ENCODE measurements at regions of chr1 and their contacts with region 1.

Region 1: DNA sequence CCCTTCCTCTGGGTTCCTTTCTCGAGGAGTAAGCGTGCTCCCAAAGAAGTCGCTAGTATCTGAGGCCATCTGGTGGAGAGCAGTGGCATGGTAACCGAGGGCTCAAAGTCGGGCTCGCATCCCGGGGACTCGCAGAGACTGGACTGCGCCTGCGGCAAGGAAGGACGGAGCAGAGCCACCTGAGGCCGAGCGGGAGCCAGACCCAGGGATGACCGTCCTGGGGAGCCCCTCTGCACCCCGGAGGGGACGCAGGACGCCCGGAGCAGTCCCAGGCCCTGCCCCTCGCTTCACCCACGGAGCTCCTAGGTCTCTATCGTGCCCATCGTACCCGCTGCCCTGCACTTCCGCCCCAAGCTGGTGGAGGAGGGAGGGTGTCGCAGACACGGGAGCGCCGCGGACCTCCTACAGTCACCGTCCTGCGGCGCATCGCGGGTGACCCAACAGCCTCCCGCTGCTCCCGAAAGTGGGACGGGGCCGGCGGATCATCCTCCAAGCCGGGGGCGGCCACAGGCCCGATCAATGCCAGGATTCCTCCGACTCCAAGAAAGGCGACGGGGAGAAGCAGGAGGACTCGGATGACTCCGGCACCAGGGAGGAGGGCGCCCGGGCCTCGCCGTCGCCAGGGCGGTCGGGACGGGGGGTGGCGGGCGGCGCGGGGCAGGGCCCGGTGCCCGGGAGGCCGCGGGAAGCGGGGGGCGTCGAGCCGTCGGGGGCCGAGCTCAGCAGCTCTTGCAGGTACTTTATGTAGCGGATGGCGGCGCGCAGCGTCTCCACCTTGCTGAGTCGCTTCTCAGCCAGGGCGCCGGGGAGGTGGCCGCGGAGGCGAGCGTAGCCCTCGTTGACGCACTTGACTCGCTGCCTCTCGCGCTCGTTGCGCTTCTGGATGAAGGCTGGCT is 2.3 kb upstream of the CACNA1S start:
- DNase-seq: peak; percentile 93
- H3K4me3 ChIP-seq: peak overlapping the region in 2 of 3 experiments; percentile 9 to 35
- H3K27ac ChIP-seq: no peak overlapping the region
- H3K4me1 ChIP-seq: no peaks in the 10 kb centered on the region
- H3K27me3 ChIP-seq: peaks cover 26 to 45% of the 10 kb centered on the region in 2 experiments
- CTCF ChIP-seq: peak; percentile 73 to 89
- POLR2A ChIP-seq: no peak

Region 2: DNA sequence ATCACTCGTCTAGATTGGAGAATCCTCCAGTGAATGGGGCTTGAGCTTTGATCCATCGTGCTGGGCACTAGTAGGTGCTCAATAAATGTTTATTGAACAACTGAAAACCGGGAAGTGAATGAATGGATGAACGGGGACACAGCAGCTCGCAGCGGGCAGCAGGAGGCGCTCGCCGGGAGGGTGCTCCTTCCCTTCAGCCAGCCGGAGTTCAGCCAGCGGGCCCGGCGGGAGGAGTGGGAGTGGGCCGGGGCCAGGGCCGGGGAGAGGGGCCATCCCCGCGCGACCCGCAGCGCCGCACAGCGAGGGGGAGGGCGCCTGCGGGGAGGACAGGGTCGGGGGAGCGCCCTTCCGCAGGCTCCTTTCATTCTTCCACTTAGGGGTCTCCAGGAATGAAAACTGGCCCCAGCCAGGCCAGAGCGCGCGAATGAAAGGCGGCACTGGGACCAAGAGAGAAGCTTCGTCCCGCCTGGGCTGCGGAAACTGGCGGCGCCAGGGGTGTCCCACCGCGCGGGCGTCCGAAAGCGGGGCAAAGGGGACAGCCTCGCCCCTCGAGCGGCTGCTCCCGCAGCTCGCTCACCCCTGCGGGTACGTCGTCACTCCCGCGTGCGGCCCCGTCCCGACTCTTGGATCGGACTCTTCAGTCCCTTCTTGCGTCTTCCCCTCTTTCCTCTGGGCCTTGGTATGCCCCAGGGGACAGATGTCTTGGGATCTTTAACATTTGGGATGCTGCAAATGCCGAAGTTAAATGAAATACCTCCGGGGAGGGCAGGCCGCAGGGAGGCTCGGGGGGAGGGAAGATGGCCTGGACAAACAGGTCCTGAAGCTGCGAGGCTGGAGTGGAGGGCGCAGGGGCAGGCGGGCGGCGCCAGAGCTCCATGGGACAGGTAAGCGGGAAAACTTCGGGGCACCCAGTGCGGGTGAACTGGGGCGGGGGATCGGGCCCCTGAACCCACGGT is 223.4 kb before region 1 on chr1:
- CTCF ChIA-PET with region 1: no interaction called
- POLR2A ChIA-PET with region 1: no interaction called
- dilution Hi-C with region 1: no loop called
- intact Hi-C with region 1: loop called (anchors 5 kb)
- DNase-seq: peak; percentile 27
- H3K4me3 ChIP-seq: peak overlapping the region in 2 of 3 experiments; percentile 30 to 47
- H3K27ac ChIP-seq: no peak overlapping the region
- H3K4me1 ChIP-seq: no peaks in the 10 kb centered on the region
- H3K27me3 ChIP-seq: peaks cover 39 to 46% of the 10 kb centered on the region in 2 experiments
- CTCF ChIP-seq: peak; percentile 50
- POLR2A ChIP-seq: no peak

Region 3: GRCh38 chr1:201023517-201023902 is 91.0 kb before region 1 on chr1 and contains the start of gene KIF21B:
- CTCF ChIA-PET with region 1: interaction called, 12 read pairs
- POLR2A ChIA-PET with region 1: no interaction called
- dilution Hi-C with region 1: no loop called
- intact Hi-C with region 1: no loop called
- DNase-seq: peak; percentile 75
- H3K4me3 ChIP-seq: peak within 1 kb of the TSS; percentile 11 to 49 (median 13)
- H3K27ac ChIP-seq: no peak within 1 kb of the TSS
- H3K4me1 ChIP-seq: peaks cover 37% of the 10 kb centered on the region
- H3K27me3 ChIP-seq: no peaks in the 10 kb centered on the region
- CTCF ChIP-seq: no peak
- POLR2A ChIP-seq: no peak
- total RNA-seq, gene KIF21B: 4.4 and 4.7 TPM in 2 replicates

Region 4: DNA sequence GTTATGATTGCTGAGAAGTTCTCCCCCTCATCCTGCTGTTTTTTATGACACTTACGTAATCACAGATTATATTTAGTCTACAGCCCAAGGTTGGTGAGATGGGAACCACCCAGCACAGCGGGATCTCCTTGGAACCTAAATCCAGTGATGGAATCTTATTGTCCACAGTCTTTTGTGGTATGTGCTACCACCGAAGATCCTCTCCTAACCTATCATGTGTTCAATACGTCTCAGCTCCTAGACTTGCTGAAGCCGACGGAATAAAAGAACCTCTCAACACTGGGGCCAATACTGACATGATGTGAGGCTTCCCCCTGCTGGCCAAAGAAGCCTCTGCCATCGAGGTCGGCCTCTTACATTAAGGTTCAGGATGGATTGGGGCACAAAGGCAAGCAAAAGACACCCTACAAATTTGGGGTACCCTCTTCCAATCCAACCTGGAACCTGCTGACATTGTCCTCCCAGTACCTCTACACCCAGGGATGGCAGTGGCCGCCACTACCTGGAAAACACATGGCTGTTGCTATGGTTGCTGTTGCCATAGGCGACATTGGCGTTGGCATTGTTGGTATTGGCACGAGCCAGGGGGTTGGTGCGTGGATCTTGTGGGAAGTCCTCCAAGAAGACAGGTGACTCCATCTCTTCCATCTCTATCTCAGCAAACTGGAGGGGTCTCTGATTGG is 71.6 kb before region 1 on chr1:
- CTCF ChIA-PET with region 1: interaction called, 7 read pairs
- POLR2A ChIA-PET with region 1: no interaction called
- dilution Hi-C with region 1: no loop called
- intact Hi-C with region 1: loop called (anchors 5 kb)
- DNase-seq: peak; percentile 73
- H3K4me3 ChIP-seq: no peak overlapping the region
- H3K27ac ChIP-seq: no peak overlapping the region
- H3K4me1 ChIP-seq: no peaks in the 10 kb centered on the region
- H3K27me3 ChIP-seq: peaks cover 0 to 2% of the 10 kb centered on the region in 2 experiments
- CTCF ChIP-seq: peak; percentile 86 to 91
- POLR2A ChIP-seq: no peak

Region 5: DNA sequence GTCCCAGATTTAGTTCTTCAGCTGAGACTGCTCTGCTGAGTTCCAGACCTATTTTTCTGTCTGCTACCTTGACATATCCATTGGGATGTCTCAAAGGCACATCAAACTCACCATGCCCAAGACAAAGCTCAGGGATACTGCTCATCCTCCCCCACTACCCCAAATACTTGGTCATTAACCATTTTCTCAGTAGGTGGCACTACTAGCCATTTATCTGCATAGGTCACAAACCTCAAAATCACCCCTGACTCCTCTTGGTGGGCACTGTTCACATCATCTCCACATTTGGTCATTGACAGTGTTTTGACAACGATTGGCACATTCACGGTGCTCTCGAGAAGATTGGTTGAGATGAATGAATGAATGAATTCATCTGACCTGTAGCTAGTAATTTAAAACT is 34.3 kb before region 1 on chr1:
- CTCF ChIA-PET with region 1: interaction called, 54 read pairs
- POLR2A ChIA-PET with region 1: no interaction called
- dilution Hi-C with region 1: no loop called
- intact Hi-C with region 1: no loop called
- DNase-seq: no peak
- H3K4me3 ChIP-seq: no peak overlapping the region
- H3K27ac ChIP-seq: no peak overlapping the region
- H3K4me1 ChIP-seq: no peaks in the 10 kb centered on the region
- H3K27me3 ChIP-seq: peaks cover 7% of the 10 kb centered on the region in 2 experiments
- CTCF ChIP-seq: no peak
- POLR2A ChIP-seq: no peak

Region 6: DNA sequence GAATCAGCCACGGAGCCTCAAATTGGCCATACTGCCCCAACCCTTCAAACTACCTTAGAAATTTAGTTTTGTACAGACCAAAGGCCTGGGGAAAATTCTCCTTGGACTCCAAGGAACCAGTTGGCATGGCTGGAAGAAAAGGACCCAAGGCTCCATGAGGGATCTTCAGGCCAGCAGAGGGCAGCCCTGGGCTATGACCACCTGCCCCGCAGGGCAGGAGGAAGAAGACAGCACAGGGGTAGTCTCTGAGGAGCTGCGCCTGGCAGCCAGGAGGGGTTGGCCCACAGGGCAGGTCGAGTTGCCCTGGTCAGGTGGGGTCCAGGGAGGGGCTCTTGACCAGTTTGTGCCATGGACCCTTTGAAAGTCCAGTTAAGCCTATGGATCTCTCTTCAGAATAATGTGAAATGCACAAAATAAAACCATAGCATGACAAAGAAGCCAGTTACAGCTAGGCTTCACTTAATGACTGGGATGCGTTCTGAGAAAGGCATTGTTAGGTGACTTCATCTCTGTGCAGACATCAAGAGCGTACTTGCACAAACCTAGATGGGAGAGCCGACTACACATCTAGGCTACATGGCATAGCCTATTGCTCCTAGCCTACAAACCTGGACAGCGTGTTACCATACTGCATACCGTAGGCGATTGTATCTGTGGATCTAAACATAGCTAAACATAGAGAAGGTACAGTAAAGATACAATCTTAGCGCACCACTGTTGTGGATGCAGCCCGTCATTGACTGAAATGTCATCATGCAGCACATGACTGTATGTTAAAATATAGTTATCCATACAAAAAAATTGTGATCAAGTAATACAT is 28.4 kb before region 1 on chr1:
- CTCF ChIA-PET with region 1: interaction called, 54 read pairs
- POLR2A ChIA-PET with region 1: interaction called, 3 read pairs
- dilution Hi-C with region 1: no loop called
- intact Hi-C with region 1: loop called (anchors 1 kb)
- DNase-seq: peak; percentile 31
- H3K4me3 ChIP-seq: no peak overlapping the region
- H3K27ac ChIP-seq: no peak overlapping the region
- H3K4me1 ChIP-seq: no peaks in the 10 kb centered on the region
- H3K27me3 ChIP-seq: peaks cover 7% of the 10 kb centered on the region in 2 experiments
- CTCF ChIP-seq: peak; percentile 36 to 70
- POLR2A ChIP-seq: no peak

Measured in endothelial cell of umbilical vein (primary cell).